ENCODE measurements at regions of chr3 and their contacts with region 1.

Region 1: DNA sequence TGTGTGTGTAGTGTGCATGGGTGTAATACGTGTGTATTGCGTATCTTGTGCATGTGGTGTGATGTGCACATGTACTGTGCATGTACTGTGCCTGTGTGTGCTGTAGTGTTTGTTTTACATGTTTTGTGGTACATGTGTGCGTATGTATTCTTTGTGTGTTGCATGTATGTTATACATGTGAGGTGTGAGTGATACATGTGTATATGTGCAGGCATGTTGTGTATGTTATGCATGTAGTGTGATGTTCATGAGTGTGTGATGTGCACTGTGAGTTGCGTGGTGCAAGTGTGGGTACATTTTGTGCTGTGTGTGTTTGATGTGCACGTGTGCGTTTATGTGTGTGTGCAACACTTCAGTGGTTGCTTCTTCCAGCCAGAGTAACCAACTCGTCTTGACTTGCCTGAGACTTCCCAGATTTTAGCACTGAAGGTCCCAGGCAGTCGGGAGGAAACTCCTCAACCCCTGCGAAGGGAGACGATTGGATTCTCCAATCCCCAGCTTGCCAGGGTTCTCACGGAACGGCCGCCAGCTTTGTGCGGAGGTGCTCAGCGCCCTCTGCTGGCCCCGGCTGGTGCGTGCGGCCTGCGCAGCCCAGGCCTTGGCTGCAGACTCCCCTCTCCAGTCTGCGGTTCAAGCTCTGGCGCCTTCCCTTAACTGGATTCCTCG is 3.6 kb downstream of the GALNT15 start:
- DNase-seq: peak; percentile 72 to 83
- ATAC-seq: peak; percentile 85 to 95
- H3K4me3 ChIP-seq: no peak overlapping the region
- H3K27ac ChIP-seq: peak overlapping the region; percentile 72 to 75
- H3K4me1 ChIP-seq: peaks cover 17% of the 10 kb centered on the region; the same call in 2 of the 3 replicates
- CTCF ChIP-seq: peak; percentile 95
- EP300 ChIP-seq: no peak
- POLR2A ChIP-seq: no peak
- RAD21 ChIP-seq: peak; percentile 98 to 99

Region 2: GRCh38 chr3:15953841-15954240 is 224.3 kb before region 1 on chr3:
- CTCF ChIA-PET with region 1: no interaction called
- POLR2A ChIA-PET with region 1: no interaction called
- DNase-seq: peak in 1 of 2 experiments; percentile 19
- ATAC-seq: peak in 1 of 2 experiments; percentile 40; a peak in 2 of 6 replicates
- H3K4me3 ChIP-seq: no peak overlapping the region
- H3K27ac ChIP-seq: no peak overlapping the region
- H3K4me1 ChIP-seq: no peaks in the 10 kb centered on the region
- CTCF ChIP-seq: 0 out of 3 replicates have a peak, but pooled peaks have one; percentile 11
- EP300 ChIP-seq: no peak
- POLR2A ChIP-seq: no peak
- RAD21 ChIP-seq: no peak

Region 3: GRCh38 chr3:16053794-16054193 is 124.3 kb before region 1 on chr3:
- CTCF ChIA-PET with region 1: interaction called, 373 read pairs
- POLR2A ChIA-PET with region 1: no interaction called
- DNase-seq: no peak
- ATAC-seq: no peak
- H3K4me3 ChIP-seq: no peak overlapping the region
- H3K27ac ChIP-seq: peak overlapping the region; percentile 36 to 41; a peak in 4 of 6 replicates
- H3K4me1 ChIP-seq: peaks cover 24% of the 10 kb centered on the region; the same call in 2 of the 3 replicates
- CTCF ChIP-seq: no peak
- EP300 ChIP-seq: no peak
- POLR2A ChIP-seq: no peak
- RAD21 ChIP-seq: no peak

Region 4: DNA sequence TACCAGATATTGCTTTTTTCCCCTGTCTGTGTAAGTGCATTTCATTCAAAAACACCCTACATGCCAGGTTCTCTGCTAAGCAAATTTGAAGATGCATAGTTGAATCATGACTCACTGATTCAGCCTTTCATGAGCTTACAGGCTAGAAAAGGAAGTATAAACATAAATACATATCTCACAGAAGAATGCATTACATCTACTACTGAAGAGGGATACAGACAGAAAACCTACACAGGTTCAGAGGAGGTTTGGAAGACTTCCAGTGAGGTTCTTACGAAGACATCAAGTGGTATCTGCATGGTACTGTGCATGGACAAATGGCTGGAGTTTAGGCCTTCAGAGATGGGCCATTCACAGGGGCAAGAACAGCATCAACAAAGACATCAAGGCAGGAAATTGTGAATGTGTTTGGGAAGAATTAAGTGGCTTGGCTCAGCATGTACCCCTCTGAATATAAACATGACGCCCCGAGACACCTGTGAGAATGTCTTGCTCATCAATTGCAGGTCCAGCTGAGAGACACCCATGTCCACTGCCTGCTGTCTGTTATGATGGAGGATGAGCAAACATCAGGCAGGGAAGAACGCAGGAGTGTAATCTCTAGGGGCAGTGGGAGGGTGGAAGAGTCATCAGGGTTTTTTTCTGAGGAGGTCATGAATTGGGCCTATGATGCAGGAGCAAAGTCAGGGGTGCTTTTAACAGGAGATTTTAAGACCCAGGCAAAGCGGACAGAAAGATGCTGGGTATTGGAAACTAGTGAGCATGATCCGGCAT is 108.8 kb before region 1 on chr3:
- CTCF ChIA-PET with region 1: interaction called, 17 read pairs
- POLR2A ChIA-PET with region 1: no interaction called
- DNase-seq: peak; percentile 57 to 93
- ATAC-seq: peak; percentile 89 to 92
- H3K4me3 ChIP-seq: no peak overlapping the region
- H3K27ac ChIP-seq: peak overlapping the region; percentile 73 to 89
- H3K4me1 ChIP-seq: peaks cover 58% of the 10 kb centered on the region
- CTCF ChIP-seq: no peak
- EP300 ChIP-seq: peak; percentile 56 to 79; a peak in 2 of 5 replicates
- POLR2A ChIP-seq: no peak
- RAD21 ChIP-seq: peak; percentile 21 to 36; a peak in 3 of 5 replicates

Region 5: DNA sequence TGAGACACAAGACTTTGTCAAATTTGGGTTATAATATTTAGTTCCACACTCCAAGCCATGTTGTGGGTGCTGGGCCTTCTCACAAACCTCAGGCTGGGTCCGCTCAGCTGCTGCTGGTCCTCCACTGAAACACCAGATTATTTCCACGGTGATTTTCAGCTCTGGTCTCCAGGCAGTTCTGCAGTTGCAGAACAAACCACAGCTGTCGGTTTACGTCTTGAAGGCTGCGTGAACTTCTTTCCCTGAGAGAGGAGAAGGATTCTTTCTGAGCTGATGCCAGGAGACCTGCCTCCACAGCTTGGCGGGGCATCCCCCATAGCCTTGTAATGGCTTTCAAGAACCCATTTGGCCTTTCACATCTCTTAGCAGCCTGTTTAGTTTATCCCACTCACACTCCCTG is 12.6 kb after region 1 on chr3:
- CTCF ChIA-PET with region 1: interaction called, 28 read pairs
- POLR2A ChIA-PET with region 1: no interaction called
- DNase-seq: no peak
- ATAC-seq: no peak
- H3K4me3 ChIP-seq: no peak overlapping the region
- H3K27ac ChIP-seq: no peak overlapping the region
- H3K4me1 ChIP-seq: no peaks in the 10 kb centered on the region
- CTCF ChIP-seq: no peak
- EP300 ChIP-seq: no peak
- POLR2A ChIP-seq: no peak
- RAD21 ChIP-seq: no peak

Region 6: GRCh38 chr3:16253601-16254000 is 75.5 kb after region 1 on chr3:
- CTCF ChIA-PET with region 1: interaction called, 14 read pairs
- POLR2A ChIA-PET with region 1: no interaction called
- DNase-seq: no peak
- ATAC-seq: no peak
- H3K4me3 ChIP-seq: no peak overlapping the region
- H3K27ac ChIP-seq: no peak overlapping the region
- H3K4me1 ChIP-seq: no peaks in the 10 kb centered on the region
- CTCF ChIP-seq: no peak
- EP300 ChIP-seq: no peak
- POLR2A ChIP-seq: no peak
- RAD21 ChIP-seq: no peak

Region 7: GRCh38 chr3:16419640-16420241 is 241.6 kb after region 1 on chr3:
- CTCF ChIA-PET with region 1: no interaction called
- POLR2A ChIA-PET with region 1: no interaction called
- DNase-seq: no peak
- ATAC-seq: peak in 1 of 2 experiments; percentile 50; a peak in 3 of 6 replicates
- H3K4me3 ChIP-seq: no peak overlapping the region
- H3K27ac ChIP-seq: 0 out of 6 replicates have a peak overlapping the region, but pooled peaks of 1 of the 2 experiments have one; percentile 17
- H3K4me1 ChIP-seq: peaks cover 19% of the 10 kb centered on the region
- CTCF ChIP-seq: no peak
- EP300 ChIP-seq: no peak
- POLR2A ChIP-seq: no peak
- RAD21 ChIP-seq: no peak

Region 8: DNA sequence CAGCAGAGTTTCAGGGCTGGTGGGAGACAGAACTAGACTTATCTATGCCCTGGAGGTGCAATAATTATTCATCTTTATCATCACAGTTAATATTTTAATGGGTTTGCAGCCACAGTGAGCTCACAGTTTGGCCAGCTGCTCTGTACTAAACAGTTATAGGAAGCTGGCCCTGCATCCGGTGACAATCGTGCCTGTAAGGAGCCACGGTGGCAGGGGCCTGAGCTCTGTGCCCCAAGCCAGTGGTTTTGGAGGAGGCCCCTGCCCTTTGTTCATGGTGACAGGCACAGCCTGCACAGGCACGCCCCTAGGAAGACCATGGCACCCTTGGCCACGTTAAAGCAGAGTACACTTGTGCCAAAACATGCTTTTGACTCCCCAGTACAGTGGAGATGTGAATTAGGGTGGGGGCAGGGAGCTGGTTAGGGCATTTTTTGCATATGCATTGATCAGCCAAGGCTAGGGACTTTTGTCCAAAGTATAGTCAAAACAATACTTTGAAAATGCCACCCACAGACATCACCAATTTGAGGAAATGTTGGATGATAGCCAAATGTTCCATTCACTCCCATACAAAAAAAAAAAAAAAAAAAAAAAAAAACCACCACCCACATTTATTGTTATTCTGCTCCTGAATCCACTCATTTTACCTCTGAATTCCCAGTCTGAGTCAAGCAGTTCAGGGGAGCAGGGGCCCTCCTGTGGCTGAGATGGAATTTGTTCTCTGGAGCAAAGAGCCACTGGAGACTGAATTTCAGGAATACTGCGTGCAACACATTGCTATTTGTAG is 338.8 kb after region 1 on chr3:
- CTCF ChIA-PET with region 1: no interaction called
- POLR2A ChIA-PET with region 1: no interaction called
- DNase-seq: peak; percentile 38
- ATAC-seq: peak; percentile 55 to 70; a peak in 4 of 6 replicates
- H3K4me3 ChIP-seq: no peak overlapping the region
- H3K27ac ChIP-seq: no peak overlapping the region
- H3K4me1 ChIP-seq: no peaks in the 10 kb centered on the region
- CTCF ChIP-seq: peak; percentile 49
- EP300 ChIP-seq: no peak
- POLR2A ChIP-seq: no peak
- RAD21 ChIP-seq: peak; percentile 60 to 65